Activated CD4-positive, alpha-beta T cell treated with anti-CD3 and anti-CD28 coated beads for 36 hours (primary cell): ENCODE measurements at regions of chr2 and their contacts with region 1.

Region 1: GRCh38 chr2:216057688-216058193 is 23.9 kb downstream of the PECR start:
- DNase-seq: peak; percentile 72
- ATAC-seq: peak; percentile 95
- H3K4me3 Mint-ChIP-seq: peak overlapping the region; percentile 63
- H3K27ac Mint-ChIP-seq: peak overlapping the region; percentile 93
- H3K4me1 Mint-ChIP-seq: peaks cover 27% of the 10 kb centered on the region
- H3K27me3 Mint-ChIP-seq: no peaks in the 10 kb centered on the region

Region 2: DNA sequence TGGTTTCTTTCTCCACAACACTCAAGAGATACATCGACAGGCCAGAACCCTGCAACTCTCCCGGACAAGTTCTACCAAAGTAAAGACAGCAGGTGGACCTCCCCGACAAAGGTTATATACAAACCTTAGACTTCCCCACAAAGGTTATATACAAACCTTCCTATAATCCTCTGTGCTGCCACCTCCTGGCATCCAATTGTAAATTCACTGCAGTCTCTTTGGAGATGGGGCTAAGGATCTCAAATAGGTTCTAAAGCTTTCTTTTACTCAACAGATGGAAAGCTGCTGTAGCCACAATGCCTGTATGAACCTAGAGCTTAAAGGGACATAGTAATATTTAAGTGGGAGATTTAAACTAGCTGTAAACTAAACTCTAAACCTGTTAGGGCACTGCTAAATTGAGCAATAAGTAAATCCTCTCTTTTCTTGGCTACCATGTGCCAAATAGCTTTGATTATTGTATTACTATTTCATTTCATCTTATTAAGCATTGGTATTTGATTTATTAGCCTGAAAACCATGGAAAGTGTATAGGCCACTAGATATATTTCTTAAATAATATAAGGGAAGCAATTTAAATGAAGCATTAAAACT is 34.6 kb before region 1 on chr2:
- CTCF ChIA-PET with region 1: interaction called, 11 read pairs
- POLR2A ChIA-PET with region 1: no interaction called
- intact Hi-C with region 1: no loop called
- DNase-seq: peak; percentile 72
- ATAC-seq: peak; percentile 88
- H3K4me3 Mint-ChIP-seq: no peak overlapping the region
- H3K27ac Mint-ChIP-seq: no peak overlapping the region
- H3K4me1 Mint-ChIP-seq: peaks cover 5% of the 10 kb centered on the region
- H3K27me3 Mint-ChIP-seq: no peaks in the 10 kb centered on the region

Region 3: DNA sequence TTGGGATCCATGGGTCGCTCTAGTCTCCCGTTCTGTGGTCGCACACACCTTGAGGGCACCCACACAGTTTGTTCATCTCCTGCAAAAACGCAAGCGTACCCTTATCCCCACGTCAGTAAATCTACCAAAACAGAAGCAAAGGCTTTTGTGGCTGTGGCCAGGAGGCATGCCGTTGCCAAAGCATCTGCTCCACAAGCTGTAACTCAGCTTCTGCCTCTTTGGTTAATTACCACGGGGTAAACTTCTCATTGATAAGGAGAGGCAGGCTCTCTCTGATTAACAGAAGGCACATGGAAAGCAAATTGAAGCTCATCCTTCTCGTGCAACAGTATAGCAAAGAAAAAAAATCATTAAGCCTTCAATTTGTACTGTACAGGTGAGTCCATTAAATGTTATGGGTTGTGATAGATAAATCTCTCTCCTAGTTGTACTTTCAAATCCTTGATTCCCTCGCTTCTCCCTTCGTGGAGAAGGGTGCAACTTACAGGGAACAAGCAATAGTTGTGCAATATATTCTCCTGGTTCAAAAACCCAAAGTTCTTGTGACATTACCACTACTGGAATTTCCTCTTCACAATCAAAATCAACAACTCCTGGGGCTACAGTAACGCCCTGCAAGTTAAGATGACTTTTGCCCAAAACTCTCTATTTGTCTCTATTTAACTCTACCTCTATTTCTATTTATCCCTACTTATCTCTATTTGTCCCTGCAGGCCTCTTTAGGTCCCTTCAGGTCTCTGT is 13.5 kb after region 1 on chr2:
- CTCF ChIA-PET with region 1: interaction called, 17 read pairs
- POLR2A ChIA-PET with region 1: no interaction called
- intact Hi-C with region 1: no loop called
- DNase-seq: no peak
- ATAC-seq: no peak
- H3K4me3 Mint-ChIP-seq: no peak overlapping the region
- H3K27ac Mint-ChIP-seq: no peak overlapping the region
- H3K4me1 Mint-ChIP-seq: peaks cover 36% of the 10 kb centered on the region
- H3K27me3 Mint-ChIP-seq: no peaks in the 10 kb centered on the region

Region 4: DNA sequence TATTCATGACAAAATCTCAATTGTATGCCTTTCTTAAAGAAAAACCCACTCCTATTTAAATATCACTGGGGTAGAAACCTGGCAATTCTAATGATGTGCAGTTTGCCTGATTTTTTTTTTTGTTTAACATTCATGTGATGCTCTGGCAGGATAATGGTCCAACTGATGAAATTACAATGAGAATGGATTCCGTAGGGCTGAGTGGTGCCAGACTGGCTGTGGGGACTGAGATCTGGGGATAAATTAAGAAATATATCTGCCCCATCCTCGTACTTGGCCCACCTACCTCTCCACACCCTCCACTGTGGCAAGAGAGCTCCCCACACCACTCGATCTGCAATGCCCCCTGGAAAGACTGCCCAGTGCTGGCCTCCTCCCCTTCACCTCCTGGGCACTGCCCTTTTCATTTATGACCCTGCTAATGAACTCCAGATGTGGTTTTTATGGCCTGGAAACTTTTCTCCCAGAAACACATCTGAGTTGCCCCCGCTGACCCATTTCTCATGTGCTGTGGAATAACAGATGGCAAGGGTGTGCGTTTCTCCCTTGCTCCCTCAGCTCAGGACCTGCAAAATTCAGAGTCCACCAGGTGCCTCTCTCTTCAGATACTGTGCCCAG is 407.9 kb after region 1 on chr2:
- CTCF ChIA-PET with region 1: no interaction called
- POLR2A ChIA-PET with region 1: no interaction called
- intact Hi-C with region 1: no loop called
- DNase-seq: no peak
- ATAC-seq: no peak
- H3K4me3 Mint-ChIP-seq: no peak overlapping the region
- H3K27ac Mint-ChIP-seq: no peak overlapping the region
- H3K4me1 Mint-ChIP-seq: no peaks in the 10 kb centered on the region
- H3K27me3 Mint-ChIP-seq: no peaks in the 10 kb centered on the region

Region 5: DNA sequence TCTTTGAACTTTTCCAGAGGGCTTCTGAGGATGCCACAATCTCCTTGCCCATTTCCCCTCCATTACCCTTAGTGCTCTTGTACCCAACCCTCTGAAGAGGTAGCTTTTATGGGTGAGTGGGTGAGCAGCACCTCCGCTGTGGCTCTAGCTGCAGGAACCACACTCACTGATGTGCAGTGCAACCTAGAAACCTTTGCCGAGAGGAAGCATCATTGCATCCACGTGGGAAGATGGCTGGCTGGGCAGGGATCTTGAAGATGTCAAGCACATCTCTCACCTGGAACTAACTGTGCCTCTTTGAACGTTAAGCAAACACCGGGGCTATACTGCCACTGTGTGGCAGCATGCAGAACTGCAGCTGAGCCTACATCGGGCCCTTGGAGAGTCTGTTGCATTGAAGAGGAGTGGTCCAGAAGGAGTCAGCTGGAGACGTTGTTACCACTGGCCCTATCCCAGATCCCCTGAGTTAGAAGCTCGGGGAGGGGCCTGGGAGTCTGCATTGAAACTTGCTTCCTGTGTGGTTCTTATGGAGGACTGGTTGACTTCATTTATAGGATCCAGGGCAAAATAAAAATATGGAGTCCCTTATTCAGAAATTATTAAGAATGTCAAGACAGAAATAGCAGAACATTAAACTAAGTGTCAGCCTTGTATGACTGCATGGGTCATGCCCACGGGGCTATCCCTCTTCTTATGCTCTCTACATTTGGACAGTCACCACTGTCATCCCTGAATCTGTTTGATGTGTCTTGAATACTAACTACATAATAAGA is 608.9 kb after region 1 on chr2:
- CTCF ChIA-PET with region 1: no interaction called
- POLR2A ChIA-PET with region 1: no interaction called
- intact Hi-C with region 1: no loop called
- DNase-seq: peak; percentile 80
- ATAC-seq: peak; percentile 85
- H3K4me3 Mint-ChIP-seq: no peak overlapping the region
- H3K27ac Mint-ChIP-seq: no peak overlapping the region
- H3K4me1 Mint-ChIP-seq: no peaks in the 10 kb centered on the region
- H3K27me3 Mint-ChIP-seq: peaks cover 2% of the 10 kb centered on the region